ENCODE measurements at regions of chr10 and their contacts with region 1.

Region 1: DNA sequence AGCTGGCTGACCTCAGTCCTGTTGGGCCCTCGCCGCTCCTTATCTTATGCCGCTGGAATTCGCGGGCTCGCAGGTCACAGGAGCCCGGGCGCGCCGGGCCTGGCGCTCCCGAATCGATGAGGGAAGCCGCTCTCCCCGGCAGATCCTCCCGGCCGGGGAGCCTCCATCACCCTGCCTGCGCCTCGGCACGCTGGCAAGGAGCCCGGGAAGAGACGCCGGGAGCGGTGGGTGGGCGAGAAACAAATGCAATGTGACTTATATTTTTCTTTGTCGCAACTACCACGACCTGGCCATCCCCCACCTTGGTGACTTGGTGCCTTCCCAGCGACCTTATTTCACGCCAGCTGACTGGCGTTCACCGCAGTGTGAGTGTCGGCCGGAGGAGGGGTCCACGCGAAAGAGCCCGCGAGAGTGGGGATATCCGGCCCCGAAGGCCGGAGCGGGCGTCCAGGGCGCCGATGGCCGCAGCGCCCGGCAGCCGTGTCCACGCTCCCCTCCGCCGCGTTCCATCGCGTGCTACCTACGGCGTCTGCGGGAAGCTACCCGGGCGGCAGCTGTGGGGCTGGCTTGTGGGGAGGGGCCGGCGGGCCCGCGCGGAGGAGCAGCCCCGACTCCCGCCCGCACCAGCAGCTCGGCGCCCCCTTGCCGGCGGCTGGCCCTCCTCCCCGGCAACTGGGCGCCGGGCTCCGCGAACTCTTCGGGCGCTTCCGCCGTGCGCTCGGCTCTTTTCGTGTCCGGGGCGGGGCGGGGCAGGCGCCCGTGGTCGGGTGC is 494 bp upstream of the BMPR1A start:
- DNase-seq: peak; percentile 86
- ATAC-seq: peak; percentile 91
- H3K4me3 ChIP-seq: peak overlapping the region; percentile 28 to 81 (median 71)
- H3K4me3 Mint-ChIP-seq: peak overlapping the region; percentile 90
- H3K27ac ChIP-seq: no peak overlapping the region
- H3K27ac Mint-ChIP-seq: peak overlapping the region; percentile 67
- H3K4me1 ChIP-seq: peaks cover 37 to 39% of the 10 kb centered on the region in 2 donors
- H3K4me1 Mint-ChIP-seq: peaks cover 44% of the 10 kb centered on the region
- H3K27me3 ChIP-seq: peaks cover 3 to 29% (median 23%) of the 10 kb centered on the region in 4 experiments
- H3K27me3 Mint-ChIP-seq: peaks cover 26% of the 10 kb centered on the region
- CTCF ChIP-seq: no peak

Region 2: DNA sequence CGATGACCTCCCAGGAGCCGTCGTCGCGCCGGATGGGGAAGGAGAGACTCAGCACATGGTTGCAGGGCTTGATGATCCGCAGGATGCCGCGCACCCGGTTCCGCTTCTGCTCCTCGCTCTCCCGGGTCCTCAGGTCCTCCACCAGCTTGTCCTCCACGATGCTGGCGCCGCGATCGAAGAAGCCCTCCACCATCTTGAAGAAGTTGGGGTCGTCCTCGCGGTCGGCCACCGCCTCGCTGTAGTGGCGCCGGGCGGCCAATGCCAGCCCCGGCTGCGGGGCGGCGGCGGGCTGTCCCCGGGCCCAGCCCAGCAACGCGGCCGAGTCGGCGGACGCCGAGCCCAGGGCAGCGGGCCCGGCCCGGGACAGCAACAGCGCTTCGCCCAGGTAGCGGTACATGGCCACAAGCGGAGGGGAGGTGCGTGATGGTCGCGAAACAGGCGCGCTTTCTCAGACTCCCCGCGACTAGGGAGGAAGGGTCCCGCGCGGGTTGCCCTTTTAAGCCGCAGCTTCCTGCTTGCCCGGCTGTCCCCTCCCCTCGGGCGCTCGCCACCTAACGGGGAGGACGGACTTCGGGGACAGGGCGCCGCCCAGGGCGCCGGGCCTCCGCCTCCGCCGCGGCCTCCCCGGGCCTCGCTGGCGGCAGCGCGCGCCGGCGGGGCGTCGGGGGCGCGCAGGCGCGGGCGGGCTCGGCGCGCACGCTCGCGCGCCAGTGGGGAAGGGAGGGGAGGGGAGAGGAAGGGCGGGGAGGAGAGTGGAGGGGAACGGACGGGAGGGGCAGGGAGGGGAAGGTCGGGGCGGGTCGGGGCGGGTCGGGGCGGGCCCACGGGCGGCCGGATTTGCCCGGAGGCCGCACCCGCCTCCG is 338.7 kb after region 1 on chr10 and contains the starts of genes GLUD1 and SHLD2:
- CTCF ChIA-PET with region 1: no interaction called
- POLR2A ChIA-PET with region 1: no interaction called
- intact Hi-C with region 1: loop called (anchors 2 kb)
- DNase-seq: peak; percentile 92
- ATAC-seq: peak; percentile 73
- H3K4me3 ChIP-seq: peak within 1 kb of the TSS; percentile 59 to 79 (median 78)
- H3K4me3 Mint-ChIP-seq: peak within 1 kb of the TSS; percentile 96
- H3K27ac ChIP-seq: peak within 1 kb of the TSS; percentile 86 to 93
- H3K27ac Mint-ChIP-seq: peak within 1 kb of the TSS; percentile 95
- H3K4me1 ChIP-seq: peaks cover 26 to 32% of the 10 kb centered on the region in 2 donors
- H3K4me1 Mint-ChIP-seq: peaks cover 51% of the 10 kb centered on the region
- H3K27me3 ChIP-seq: no peaks in the 10 kb centered on the region
- H3K27me3 Mint-ChIP-seq: no peaks in the 10 kb centered on the region
- CTCF ChIP-seq: no peak
- total RNA-seq, gene GLUD1: 71.5 and 81.0 TPM in 2 replicates
- total RNA-seq, gene SHLD2: 22.0 and 22.3 TPM in 2 replicates

Measured in B cell (primary cell).